Vagina (tissue), 2 donors: ENCODE measurements at regions of chr18 and their contacts with region 1.

Region 1: DNA sequence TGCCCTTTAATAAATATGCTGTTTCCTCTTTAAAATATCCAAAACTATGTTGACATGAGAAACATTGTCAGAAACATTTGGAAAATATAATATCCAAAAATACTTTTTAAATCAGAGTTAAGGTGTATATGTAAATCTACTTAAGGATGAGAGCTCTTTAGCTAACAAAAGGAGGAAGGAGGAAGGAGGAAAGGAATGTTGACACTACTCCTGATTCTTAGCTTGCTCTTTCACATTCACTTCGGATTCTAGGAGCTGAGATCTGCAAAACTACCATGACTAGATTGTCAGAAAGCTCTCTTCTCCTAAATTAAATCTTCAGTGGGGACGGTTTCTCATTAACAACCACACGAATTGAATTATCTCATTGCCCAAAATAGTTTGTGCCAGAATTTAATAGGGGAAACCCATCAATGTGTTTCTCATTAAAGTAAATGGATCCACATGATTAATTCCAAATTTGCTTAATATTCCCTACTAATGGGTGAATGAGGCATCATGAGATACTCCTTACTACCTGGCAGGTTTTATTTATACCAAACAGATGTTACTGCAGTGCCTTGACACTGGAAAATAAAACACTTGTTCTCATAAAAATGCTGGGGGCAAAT is 509.1 kb downstream of the MBD2 start:
- DNase-seq: no peak
- H3K4me3 ChIP-seq: no peak overlapping the region
- H3K27ac ChIP-seq: no peak overlapping the region
- H3K4me1 ChIP-seq: no peaks in the 10 kb centered on the region
- H3K27me3 ChIP-seq: no peaks in the 10 kb centered on the region
- CTCF ChIP-seq: no peak
- POLR2A ChIP-seq: no peak

Region 2: GRCh38 chr18:53665701-53666100 is 49.6 kb before region 1 on chr18:
- intact Hi-C with region 1: loop called (anchors 1 kb)
- DNase-seq: no peak
- H3K4me3 ChIP-seq: no peak overlapping the region
- H3K27ac ChIP-seq: no peak overlapping the region
- H3K4me1 ChIP-seq: no peaks in the 10 kb centered on the region
- H3K27me3 ChIP-seq: no peaks in the 10 kb centered on the region
- CTCF ChIP-seq: no peak
- POLR2A ChIP-seq: no peak

Region 3: DNA sequence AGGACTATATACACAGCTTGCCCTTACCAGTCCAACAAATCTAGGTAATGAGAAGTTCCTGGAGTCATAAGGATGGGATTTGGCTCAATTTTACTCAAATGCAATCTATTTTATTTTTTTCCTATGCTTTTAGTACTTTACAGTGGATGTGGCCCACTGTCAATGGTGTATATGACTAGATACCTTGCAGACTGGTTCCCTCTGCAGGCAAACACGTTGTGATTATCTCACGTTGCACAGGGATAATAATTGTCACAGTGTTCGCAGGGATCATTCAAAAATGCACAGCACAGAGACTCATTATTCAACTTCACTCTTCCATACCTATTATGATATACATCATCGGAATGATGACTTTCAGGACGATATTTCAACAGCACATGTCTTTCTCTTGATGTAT is 149.4 kb after region 1 on chr18:
- intact Hi-C with region 1: no loop called
- DNase-seq: no peak
- H3K4me3 ChIP-seq: no peak overlapping the region
- H3K27ac ChIP-seq: no peak overlapping the region
- H3K4me1 ChIP-seq: no peaks in the 10 kb centered on the region
- H3K27me3 ChIP-seq: no peaks in the 10 kb centered on the region
- CTCF ChIP-seq: no peak
- POLR2A ChIP-seq: no peak